ENCODE measurements at regions of chrX and their contacts with region 1.

Region 1: DNA sequence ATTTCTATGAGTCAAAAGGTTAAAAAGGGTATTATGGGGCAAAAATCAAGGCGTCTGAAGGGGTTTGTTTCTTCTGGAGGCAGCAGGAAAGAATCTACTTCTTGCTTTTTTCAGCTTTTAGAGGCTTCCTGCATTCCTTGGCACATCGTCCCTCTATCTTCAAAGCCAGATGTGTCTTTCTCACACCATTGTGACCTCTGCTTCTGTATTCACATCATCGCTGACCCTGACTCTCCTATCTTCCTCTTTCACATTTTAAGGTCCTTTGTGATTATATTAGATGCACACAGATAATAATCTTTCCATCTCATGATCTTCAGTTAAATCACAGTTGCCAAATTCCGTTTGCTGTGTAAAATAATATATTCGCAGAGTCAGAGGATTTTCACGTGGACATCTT is 112.7 kb downstream of the PPP4R3C start:
- DNase-seq: no peak
- H3K4me3 ChIP-seq: no peak overlapping the region
- H3K27ac ChIP-seq: no peak overlapping the region
- H3K4me1 ChIP-seq: no peaks in the 10 kb centered on the region
- H3K27me3 ChIP-seq: no peaks in the 10 kb centered on the region
- CTCF ChIP-seq: no peak
- EP300 ChIP-seq: no peak
- POLR2A ChIP-seq: no peak

Region 2: DNA sequence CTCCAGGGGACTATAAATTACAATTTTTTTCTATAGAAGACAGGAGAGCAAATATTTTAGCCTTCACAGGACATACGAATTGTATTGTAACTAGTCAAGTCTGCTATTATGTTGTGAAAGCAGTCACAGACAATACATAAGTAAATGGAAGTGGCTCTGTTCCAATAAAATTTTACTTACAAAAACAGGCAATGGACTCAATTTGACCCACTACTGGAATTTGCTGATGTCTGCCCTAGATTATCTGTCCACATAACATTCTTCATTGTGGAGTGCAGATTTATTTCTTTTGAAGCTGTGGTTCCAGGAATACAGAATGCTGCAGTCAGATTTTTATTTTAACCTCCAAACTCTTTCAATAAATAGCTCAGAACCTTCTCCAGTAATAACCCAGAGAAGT is 217.6 kb before region 1 on chrX:
- intact Hi-C with region 1: loop called in 1 of 4 experiments (anchors 10 kb)
- DNase-seq: no peak
- H3K4me3 ChIP-seq: no peak overlapping the region
- H3K27ac ChIP-seq: no peak overlapping the region
- H3K4me1 ChIP-seq: no peaks in the 10 kb centered on the region
- H3K27me3 ChIP-seq: no peaks in the 10 kb centered on the region
- CTCF ChIP-seq: no peak
- EP300 ChIP-seq: no peak
- POLR2A ChIP-seq: no peak